ENCODE measurements at regions of chr14 and their contacts with region 1.

Region 1: DNA sequence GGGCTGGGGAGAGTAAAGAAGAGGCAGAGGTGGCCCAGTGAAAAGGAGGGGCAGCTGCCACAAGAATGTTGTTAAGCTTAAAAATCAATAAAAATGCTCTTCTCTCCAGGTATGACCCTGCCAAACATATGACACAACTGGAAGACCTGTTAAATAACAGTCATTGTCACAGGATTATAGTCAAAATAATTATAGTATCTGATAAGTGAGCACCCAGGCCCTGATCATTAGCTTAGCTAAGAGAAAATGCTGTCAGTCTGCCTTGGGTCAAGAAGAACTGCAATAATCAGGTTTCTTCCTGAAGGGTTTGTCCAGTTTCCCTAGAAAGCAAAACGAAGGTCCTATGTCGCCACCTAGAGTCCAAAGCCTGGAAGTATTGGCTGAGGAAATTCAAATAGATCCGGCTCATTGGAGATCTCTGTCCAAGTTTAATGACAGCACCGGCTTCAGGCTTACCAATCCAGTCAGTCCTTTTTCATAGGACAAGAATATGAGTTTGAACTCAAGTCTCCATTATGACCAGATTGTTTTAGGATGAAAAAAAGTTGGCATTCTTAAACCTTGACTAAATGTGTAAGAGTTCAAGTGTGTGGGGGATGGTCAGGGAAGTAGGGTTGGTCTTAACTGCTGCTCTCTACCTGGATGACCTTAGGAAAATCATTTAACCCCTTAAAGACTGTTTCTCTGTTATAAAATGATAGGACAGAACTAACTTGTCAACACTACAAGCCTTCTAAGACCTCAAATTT is 22.5 kb upstream of the NKX2-8 start:
- H3K4me3 Mint-ChIP-seq: no peak overlapping the region
- H3K27ac Mint-ChIP-seq: no peak overlapping the region
- H3K4me1 Mint-ChIP-seq: no peaks in the 10 kb centered on the region
- H3K27me3 Mint-ChIP-seq: peaks cover 12% of the 10 kb centered on the region

Region 2: DNA sequence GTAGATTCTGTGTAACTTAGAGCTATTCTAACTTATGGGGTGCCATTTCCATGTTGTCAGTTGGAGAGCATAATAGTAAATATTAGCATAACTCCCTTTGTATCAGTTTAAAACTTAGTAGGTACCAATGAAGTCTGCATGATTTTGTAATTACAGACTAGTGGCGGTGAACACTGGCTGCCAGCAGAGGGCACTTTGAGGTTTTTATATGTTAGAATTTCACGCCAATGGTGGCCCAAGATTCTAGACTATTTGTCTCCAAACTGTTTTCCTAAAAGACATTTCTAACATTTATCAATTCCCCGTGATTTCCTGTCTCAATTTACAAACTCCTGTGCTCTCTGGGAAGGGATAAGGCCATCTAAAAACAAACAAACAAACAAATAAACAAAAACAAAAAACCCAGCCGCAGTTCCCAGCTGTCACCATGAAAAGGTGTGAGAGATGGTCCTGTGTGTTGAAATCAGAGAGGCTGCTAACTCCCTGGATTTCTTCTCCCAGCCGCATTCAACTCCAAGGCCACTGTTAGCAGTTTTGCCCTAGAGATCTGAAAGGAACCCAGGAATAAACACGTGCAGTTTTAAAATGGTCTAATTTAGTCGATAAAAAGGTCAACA is 721.1 kb before region 1 on chr14:
- intact Hi-C with region 1: loop called (anchors 10 kb)
- H3K4me3 Mint-ChIP-seq: no peak overlapping the region
- H3K27ac Mint-ChIP-seq: no peak overlapping the region
- H3K4me1 Mint-ChIP-seq: peaks cover 7% of the 10 kb centered on the region
- H3K27me3 Mint-ChIP-seq: peaks cover 2% of the 10 kb centered on the region